K562 (cell line): ENCODE measurements at regions of chr2 and their contacts with region 1.

Region 1: GRCh38 chr2:217756375-217757107 is 246.3 kb downstream of the TNS1 start:
- DNase-seq: peak; percentile 55 to 75 (median 73)
- ATAC-seq: peak; percentile 95
- H3K4me3 ChIP-seq: no peak overlapping the region
- H3K27ac ChIP-seq: no peak overlapping the region
- H3K4me1 ChIP-seq: peaks cover 0 to 6% of the 10 kb centered on the region in 2 experiments; a peak in 2 of 5 replicates
- H3K27me3 ChIP-seq: peaks cover 0 to 10% of the 10 kb centered on the region in 2 experiments; a peak in 1 of 5 replicates
- CTCF ChIP-seq: peak; percentile 61 to 74 (median 64)
- EP300 ChIP-seq: no peak
- POLR2A ChIP-seq: no peak
- RAD21 ChIP-seq: peak; percentile 64 to 68

Region 2: DNA sequence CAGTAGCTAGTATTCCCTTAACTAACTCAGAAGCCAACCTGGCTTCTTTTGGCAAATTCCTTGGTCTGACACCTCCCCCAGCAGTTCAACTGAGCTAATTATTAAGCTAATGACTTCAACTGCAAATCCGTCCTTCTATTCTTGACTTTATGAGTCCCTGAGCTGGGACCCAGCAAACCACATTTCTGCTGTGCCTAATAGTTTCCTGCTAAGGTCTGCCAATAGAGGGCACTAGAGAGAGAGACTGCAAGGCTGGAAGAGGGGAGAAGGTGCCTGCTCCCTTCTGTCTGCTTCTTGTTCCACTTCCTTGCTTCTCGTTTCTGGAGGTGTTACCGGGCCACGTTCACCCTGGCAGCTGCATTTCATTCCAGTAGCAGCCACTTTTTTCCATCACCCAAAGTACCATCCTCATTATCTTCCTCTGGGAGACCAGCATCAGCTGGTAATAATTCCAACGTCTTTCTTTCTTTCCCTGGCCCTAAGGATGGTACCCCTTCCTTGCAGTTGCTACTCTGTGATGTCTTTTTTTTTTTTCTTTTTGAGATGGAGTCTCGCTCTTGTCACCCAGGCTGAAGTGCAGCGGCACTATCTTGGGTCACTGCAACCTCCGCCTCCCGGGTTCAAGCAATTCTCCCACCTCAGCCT is 105.7 kb before region 1 on chr2:
- CTCF ChIA-PET with region 1: no interaction called
- POLR2A ChIA-PET with region 1: no interaction called
- in situ Hi-C with region 1: no loop called
- intact Hi-C with region 1: loop called (anchors 10 kb)
- DNase-seq: peak; percentile 28 to 52 (median 38)
- ATAC-seq: peak; percentile 85
- H3K4me3 ChIP-seq: no peak overlapping the region
- H3K27ac ChIP-seq: no peak overlapping the region
- H3K4me1 ChIP-seq: no peaks in the 10 kb centered on the region
- H3K27me3 ChIP-seq: peaks cover 0 to 4% of the 10 kb centered on the region in 2 experiments; a peak in 3 of 5 replicates
- CTCF ChIP-seq: peak; percentile 52 to 63 (median 60); a peak in 5 of 6 replicates
- EP300 ChIP-seq: no peak
- POLR2A ChIP-seq: no peak
- RAD21 ChIP-seq: peak; percentile 27 to 38; a peak in 3 of 4 replicates